ENCODE measurements at regions of chr3 and their contacts with region 1.

Region 1: GRCh38 chr3:47622671-47623461 is 44.2 kb upstream of the CSPG5 start:
- DNase-seq: no peak
- H3K4me3 ChIP-seq: no peak overlapping the region
- H3K27ac ChIP-seq: no peak overlapping the region
- H3K4me1 ChIP-seq: no peaks in the 10 kb centered on the region
- H3K27me3 ChIP-seq: no peaks in the 10 kb centered on the region
- CTCF ChIP-seq: no peak
- POLR2A ChIP-seq: no peak

Region 2: DNA sequence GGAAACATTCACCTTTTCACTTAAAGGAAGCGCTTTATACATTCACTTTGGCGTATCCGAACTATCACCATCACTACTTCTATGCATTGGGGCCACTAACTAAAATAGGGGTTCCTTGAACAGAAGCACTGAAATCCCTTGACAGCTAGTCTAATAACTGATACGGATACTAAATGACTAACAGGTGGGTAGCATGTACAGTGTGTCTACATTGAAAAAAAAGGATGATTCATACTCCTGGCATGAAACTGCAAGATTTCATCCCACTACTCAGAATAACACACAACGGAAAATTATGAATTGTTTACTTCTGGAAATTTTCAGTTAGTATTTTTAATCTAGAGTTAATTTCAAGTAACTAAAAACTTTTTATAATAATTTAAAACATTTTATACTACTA is 62.2 kb after region 1 on chr3:
- intact Hi-C with region 1: loop called (anchors 2 kb)
- DNase-seq: no peak
- H3K4me3 ChIP-seq: no peak overlapping the region
- H3K27ac ChIP-seq: no peak overlapping the region
- H3K4me1 ChIP-seq: no peaks in the 10 kb centered on the region
- H3K27me3 ChIP-seq: no peaks in the 10 kb centered on the region
- CTCF ChIP-seq: no peak
- POLR2A ChIP-seq: no peak

Measured in vagina (tissue), 2 donors.